GM13977 (cell line): ENCODE measurements at regions of chr12 and their contacts with region 1.

Region 1: DNA sequence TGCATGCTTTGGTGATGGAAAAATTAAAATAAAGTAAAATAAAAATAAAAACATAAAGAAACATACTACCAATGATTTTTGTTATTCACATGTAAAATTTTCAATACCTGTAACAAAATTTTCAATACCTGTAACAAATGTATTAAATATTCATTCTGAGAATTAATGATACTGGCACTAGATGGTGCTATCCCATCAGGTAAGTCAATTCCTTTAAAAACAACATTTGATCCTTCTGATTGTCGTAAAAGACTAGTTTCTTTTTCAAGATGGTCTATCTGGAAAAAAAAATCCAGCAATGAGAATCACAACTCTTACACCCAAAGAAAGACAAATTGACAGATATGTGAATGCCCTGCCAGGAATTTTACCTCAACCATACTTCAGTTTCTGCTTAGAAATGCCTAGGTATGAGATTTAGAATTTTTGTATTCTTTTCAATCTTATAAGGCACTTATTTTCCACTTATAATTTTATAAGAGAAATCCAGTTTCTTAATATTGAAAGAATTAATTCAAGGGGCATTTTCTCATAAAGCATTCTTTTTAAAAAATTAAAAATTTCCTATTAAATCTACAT is 30.7 kb downstream of the CEP290 start:
- DNase-seq: peak; percentile 33
- CTCF ChIP-seq: peak; percentile 38

Region 2: DNA sequence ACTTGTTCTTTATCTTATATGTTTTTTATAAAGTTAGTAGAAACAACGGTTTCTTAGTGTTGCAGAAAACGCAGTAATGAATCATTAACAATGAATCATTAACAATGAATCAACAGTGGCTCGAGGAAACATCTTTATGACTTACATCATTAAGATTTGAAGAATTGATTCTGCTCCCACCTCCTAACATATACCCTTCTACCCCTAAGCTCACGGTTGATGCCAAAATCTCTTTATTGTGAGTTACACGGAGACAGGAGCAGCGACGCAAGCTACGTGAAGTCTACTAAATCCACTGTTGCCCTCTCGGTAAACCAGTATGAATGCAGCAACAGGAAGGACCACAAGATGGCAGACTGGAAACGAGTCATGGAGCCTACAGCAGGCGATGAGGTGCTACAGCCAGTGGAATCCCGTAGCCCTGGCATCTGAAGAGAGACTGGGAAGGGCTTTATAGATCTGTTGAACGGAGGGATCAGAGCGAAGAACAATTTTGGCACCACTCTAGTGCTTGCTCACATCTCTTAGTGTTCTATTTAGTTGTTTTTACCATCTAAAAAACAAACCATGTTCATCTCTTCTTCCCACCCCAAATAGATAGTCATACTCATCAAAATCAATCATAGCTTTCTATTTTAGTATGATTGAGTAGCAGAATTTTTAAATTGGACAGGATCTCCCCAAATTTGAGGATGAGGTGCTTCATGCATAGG is 908.4 kb after region 1 on chr12:
- in situ Hi-C with region 1: loop called (anchors 25 kb)
- DNase-seq: peak; percentile 42
- CTCF ChIP-seq: peak; percentile 93